H1 (cell line): ENCODE measurements at regions of chr7 and their contacts with region 1.

Region 1: GRCh38 chr7:33423646-33424020 is 294.3 kb downstream of the BBS9 start:
- DNase-seq: peak; percentile 3 to 67
- H3K4me3 ChIP-seq: no peak overlapping the region
- H3K27ac ChIP-seq: no peak overlapping the region
- H3K4me1 ChIP-seq: peaks cover 0 to 4% (median 1%) of the 10 kb centered on the region in 4 experiments; a peak in 2 of 7 replicates
- H3K27me3 ChIP-seq: no peaks in the 10 kb centered on the region
- CTCF ChIP-seq: peak in 2 of 3 experiments; percentile 50 to 52; a peak in 2 of 4 replicates
- EP300 ChIP-seq: no peak
- POLR2A ChIP-seq: no peak
- RAD21 ChIP-seq: peak; percentile 73 to 76

Region 2: DNA sequence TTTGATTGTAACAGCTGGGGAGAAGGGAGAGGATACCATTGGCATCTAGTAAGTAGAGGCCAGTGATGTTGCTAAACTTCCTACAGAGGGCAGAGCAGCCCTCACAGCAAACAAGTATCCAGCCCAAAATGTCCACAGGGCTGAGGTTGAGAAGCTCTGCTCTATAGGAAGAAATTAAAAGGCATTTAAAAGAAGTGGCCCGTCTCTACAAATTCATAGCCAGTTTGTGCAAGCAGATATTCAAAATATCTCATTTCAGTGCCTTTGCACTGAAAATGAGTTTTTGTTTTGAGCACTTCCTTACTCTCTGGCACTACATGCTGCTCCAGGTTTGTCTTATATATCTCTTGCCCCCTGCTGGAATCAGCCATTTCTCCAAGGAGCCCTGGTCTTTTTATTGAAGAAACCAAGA is 35.7 kb after region 1 on chr7:
- CTCF ChIA-PET with region 1: interaction called, 10 read pairs
- POLR2A ChIA-PET with region 1: no interaction called
- DNase-seq: peak in 1 of 2 experiments; percentile 5
- H3K4me3 ChIP-seq: no peak overlapping the region
- H3K27ac ChIP-seq: no peak overlapping the region
- H3K4me1 ChIP-seq: no peaks in the 10 kb centered on the region
- H3K27me3 ChIP-seq: no peaks in the 10 kb centered on the region
- CTCF ChIP-seq: peak; percentile 37 to 74 (median 62)
- EP300 ChIP-seq: no peak
- POLR2A ChIP-seq: no peak
- RAD21 ChIP-seq: peak; percentile 79 to 82

Region 3: DNA sequence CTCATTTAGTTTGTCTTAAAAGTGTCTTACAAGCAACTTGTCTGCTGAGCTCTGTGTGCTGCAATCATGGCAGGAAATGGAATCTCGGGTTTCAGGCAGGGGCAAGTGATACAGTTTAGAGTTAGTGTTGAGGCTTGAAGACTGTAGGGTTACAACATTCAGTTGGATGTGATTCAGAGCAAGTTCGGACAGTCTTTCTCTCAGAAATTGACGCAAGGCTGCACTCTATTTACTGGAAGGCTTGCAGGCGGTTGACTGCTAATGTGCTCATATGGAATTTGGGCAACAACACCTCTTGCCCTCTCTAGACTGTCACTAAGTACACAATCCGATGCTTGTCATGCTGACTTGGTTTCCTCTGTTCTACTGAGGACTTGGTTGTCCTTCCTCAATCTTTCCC is 320.0 kb after region 1 on chr7:
- CTCF ChIA-PET with region 1: interaction called, 10 read pairs
- POLR2A ChIA-PET with region 1: no interaction called
- DNase-seq: no peak
- H3K4me3 ChIP-seq: no peak overlapping the region
- H3K27ac ChIP-seq: no peak overlapping the region
- H3K4me1 ChIP-seq: peaks cover 0 to 5% (median 0%) of the 10 kb centered on the region in 4 experiments; a peak in 1 of 7 replicates
- H3K27me3 ChIP-seq: no peaks in the 10 kb centered on the region
- CTCF ChIP-seq: no peak
- EP300 ChIP-seq: no peak
- POLR2A ChIP-seq: no peak
- RAD21 ChIP-seq: no peak